ENCODE measurements at regions of chr10 and their contacts with region 1.

Region 1: GRCh38 chr10:103367782-103368518 is at the start of gene TAF5:
- DNase-seq: peak; percentile 90
- H3K4me3 Mint-ChIP-seq: peak within 1 kb of the TSS; percentile 90
- H3K27ac Mint-ChIP-seq: peak within 1 kb of the TSS; percentile 92
- H3K4me1 Mint-ChIP-seq: peaks cover 8% of the 10 kb centered on the region
- H3K27me3 Mint-ChIP-seq: no peaks in the 10 kb centered on the region
- total RNA-seq, gene TAF5: 9.5 and 10.7 TPM in 2 replicates

Region 2: GRCh38 chr10:103350501-103351260 is 17.3 kb before region 1 on chr10 and contains the start of gene PCGF6:
- intact Hi-C with region 1: loop called (anchors 1 kb)
- DNase-seq: peak; percentile 70
- H3K4me3 Mint-ChIP-seq: peak within 1 kb of the TSS; percentile 96
- H3K27ac Mint-ChIP-seq: peak within 1 kb of the TSS; percentile 92
- H3K4me1 Mint-ChIP-seq: peaks cover 6% of the 10 kb centered on the region
- H3K27me3 Mint-ChIP-seq: no peaks in the 10 kb centered on the region
- total RNA-seq, gene PCGF6: 16.8 and 17.7 TPM in 2 replicates

Region 3: GRCh38 chr10:103396064-103396788 is 28.3 kb after region 1 on chr10 and contains the starts of genes ATP5MK and PDCD11:
- intact Hi-C with region 1: loop called (anchors 1 kb)
- DNase-seq: peak; percentile 95
- H3K4me3 Mint-ChIP-seq: peak within 1 kb of the TSS; percentile 92
- H3K27ac Mint-ChIP-seq: peak within 1 kb of the TSS; percentile 94
- H3K4me1 Mint-ChIP-seq: peaks cover 48% of the 10 kb centered on the region
- H3K27me3 Mint-ChIP-seq: no peaks in the 10 kb centered on the region
- total RNA-seq, gene ATP5MK: 476 and 483 TPM in 2 replicates
- total RNA-seq, gene PDCD11: 79.4 and 81.6 TPM in 2 replicates